Pancreas (tissue), 10 donors: ENCODE measurements at regions of chr12 and their contacts with region 1.

Region 1: DNA sequence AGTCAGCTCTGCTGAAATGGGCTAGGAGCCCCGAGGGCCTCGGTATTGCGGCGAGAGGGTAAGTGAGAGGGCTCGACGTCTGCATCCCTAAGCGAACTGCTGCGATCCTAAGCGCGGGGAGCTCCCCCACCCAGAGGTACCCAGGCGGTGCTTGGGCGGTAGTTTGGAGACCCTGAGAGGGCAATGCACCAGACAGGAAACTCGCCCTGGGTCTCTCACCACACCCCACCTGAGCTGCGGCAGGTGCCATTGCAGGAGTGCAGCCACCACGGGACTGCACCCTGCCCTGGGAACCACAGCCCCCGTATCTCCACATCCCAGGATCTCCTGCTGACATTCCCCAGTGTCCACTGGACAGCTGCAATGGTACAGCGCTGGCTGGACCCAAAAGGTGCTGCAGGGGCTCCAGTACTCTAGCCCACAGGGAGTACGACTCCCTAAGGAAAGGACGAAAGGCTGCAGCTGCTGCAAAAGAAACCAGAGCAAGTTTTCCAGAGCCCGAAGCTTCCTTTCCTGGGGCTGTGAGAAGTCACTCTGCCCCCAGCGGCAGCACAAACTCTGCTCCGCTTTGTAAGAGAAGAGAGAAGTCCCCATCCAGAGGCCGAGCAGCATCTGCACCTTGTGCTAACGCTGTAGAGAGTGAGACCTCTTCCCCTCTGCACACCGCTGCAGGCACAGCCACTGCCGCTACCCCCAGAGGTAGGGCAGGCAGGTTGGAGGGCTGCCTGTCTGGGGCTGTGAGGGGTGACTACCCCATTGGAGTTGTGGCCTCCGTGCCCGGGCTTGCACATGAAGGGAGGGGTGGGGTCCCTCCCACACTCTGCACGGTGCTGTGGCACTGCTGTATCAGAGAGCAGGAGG is 31.1 kb upstream of the MON2 start:
- DNase-seq: peak; percentile 36 to 77 (median 56)
- ATAC-seq: peak; percentile 81 to 92 (median 90)
- H3K4me3 ChIP-seq: peak overlapping the region; percentile 22 to 55 (median 30)
- H3K27ac ChIP-seq: no peak overlapping the region
- H3K4me1 ChIP-seq: peaks cover 0 to 3% (median 0%) of the 10 kb centered on the region in 3 donors
- H3K27me3 ChIP-seq: no peaks in the 10 kb centered on the region
- CTCF ChIP-seq: peak; percentile 11 to 30 (median 24)

Region 2: GRCh38 chr12:62192180-62192902 is 243.2 kb before region 1 on chr12:
- intact Hi-C with region 1: no loop called
- DNase-seq: peak in 5 of 6 donors; percentile 20 to 56 (median 47)
- ATAC-seq: peak; percentile 82 to 97 (median 96)
- H3K4me3 ChIP-seq: peak overlapping the region; percentile 5 to 36 (median 20)
- H3K27ac ChIP-seq: no peak overlapping the region
- H3K4me1 ChIP-seq: peaks cover 0 to 14% (median 7%) of the 10 kb centered on the region in 3 donors
- H3K27me3 ChIP-seq: peaks cover 0 to 10% (median 0%) of the 10 kb centered on the region in 4 donors
- CTCF ChIP-seq: peak; percentile 13 to 53 (median 46)

Region 3: DNA sequence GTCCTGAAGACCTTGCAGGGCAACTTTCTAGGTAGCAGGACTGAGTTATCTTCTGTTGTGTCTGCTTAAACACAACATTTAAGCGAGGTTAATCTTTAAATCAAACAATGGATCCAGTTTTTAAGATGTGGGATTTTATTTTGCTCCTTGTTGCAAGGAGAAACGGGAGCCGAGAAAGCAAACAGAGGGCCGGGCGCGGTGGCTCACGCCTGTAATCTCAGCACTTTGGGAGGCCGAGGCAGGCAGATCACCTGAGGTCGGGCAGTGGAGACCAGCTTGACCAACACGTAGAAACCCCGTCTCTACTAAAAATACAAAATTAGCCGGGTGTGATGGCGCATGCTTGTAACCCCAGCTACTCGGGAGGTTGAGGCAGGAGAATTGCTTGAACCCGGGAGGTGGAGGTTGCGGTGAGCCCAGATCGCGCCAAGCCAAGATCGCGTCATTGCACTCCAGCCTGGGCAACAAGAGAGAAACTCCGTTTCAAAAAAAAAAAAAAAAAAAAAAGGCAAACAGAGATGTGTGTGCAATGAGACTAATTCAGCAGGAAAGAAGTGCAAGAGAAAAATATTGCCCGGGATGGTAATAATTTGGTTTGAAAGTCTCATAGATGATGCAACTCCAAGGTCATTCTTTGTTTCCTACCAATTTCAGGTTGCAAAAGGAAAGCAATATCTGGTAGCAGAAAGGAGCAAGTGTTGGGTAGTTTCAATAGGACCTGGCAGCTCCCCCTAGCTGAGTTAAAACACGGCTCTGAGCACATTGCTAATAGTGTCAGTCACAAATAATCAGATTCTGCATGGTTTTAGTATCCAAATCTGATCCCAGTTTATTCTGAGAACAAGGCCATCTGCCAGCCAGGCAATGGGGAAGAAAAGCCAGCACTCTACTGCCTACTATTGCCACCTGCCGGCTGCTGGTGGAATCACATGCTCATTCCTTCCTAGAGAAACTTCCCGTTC is 358.0 kb after region 1 on chr12:
- intact Hi-C with region 1: loop called (anchors 5 to 10 kb)
- DNase-seq: peak; percentile 61 to 92 (median 82)
- ATAC-seq: peak; percentile 73 to 99 (median 95)
- H3K4me3 ChIP-seq: no peak overlapping the region
- H3K27ac ChIP-seq: no peak overlapping the region
- H3K4me1 ChIP-seq: peaks cover 0 to 4% (median 0%) of the 10 kb centered on the region in 3 donors
- H3K27me3 ChIP-seq: no peaks in the 10 kb centered on the region
- CTCF ChIP-seq: peak; percentile 83 to 93 (median 88)